Activated CD4-positive, alpha-beta memory T cell treated with anti-CD3 and anti-CD28 coated beads for 36 hours (primary cell): ENCODE measurements at regions of chr14 and their contacts with region 1.

Region 1: DNA sequence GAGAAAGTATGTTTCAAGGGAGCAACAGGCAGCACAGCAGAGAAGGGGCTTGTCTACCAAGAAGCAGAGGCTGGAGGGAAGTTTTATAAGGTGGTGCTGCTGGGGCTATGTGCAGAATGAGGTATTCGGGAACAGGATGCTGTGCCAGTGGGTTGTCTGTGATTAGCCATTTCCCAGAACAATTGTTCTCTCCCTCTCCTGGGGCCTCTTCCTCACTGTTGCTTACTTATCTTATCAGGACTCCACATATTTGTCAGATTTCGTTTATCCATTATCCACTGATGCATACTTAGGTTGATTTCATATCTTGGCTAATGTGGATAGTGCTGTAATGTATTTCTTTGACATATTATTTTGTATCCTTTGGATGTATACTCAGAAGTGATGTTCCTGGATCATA is 195.1 kb upstream of the RTL1 start:
- DNase-seq: no peak
- H3K4me3 Mint-ChIP-seq: no peak overlapping the region
- H3K27ac Mint-ChIP-seq: no peak overlapping the region
- H3K4me1 Mint-ChIP-seq: no peaks in the 10 kb centered on the region
- H3K27me3 Mint-ChIP-seq: peaks cover 13% of the 10 kb centered on the region

Region 2: GRCh38 chr14:100736234-100737180 is 362.1 kb before region 1 on chr14:
- CTCF ChIA-PET with region 1: no interaction called
- POLR2A ChIA-PET with region 1: no interaction called
- intact Hi-C with region 1: loop called (anchors 5 kb)
- DNase-seq: no peak
- H3K4me3 Mint-ChIP-seq: no peak overlapping the region
- H3K27ac Mint-ChIP-seq: no peak overlapping the region
- H3K4me1 Mint-ChIP-seq: no peaks in the 10 kb centered on the region
- H3K27me3 Mint-ChIP-seq: peaks cover 1% of the 10 kb centered on the region